Heart right ventricle (tissue), 16 donors: ENCODE measurements at regions of chr18 and their contacts with region 1.

Region 1: GRCh38 chr18:23619388-23619881 is 33.1 kb upstream of the NPC1 start:
- DNase-seq: peak in 1 of 2 donors; percentile 35
- ATAC-seq: peak; percentile 42 to 79 (median 72)
- H3K4me3 ChIP-seq: peak overlapping the region in 9 of 10 donors; percentile 23 to 69 (median 55)
- H3K27ac ChIP-seq: peak overlapping the region in 5 of 10 donors; percentile 20 to 44 (median 36)
- H3K4me1 ChIP-seq: peaks cover 0 to 15% (median 10%) of the 10 kb centered on the region in 9 donors
- H3K27me3 ChIP-seq: peaks cover 0 to 35% (median 0%) of the 10 kb centered on the region in 7 donors
- CTCF ChIP-seq: peak in 1 of 9 donors; percentile 7

Region 2: DNA sequence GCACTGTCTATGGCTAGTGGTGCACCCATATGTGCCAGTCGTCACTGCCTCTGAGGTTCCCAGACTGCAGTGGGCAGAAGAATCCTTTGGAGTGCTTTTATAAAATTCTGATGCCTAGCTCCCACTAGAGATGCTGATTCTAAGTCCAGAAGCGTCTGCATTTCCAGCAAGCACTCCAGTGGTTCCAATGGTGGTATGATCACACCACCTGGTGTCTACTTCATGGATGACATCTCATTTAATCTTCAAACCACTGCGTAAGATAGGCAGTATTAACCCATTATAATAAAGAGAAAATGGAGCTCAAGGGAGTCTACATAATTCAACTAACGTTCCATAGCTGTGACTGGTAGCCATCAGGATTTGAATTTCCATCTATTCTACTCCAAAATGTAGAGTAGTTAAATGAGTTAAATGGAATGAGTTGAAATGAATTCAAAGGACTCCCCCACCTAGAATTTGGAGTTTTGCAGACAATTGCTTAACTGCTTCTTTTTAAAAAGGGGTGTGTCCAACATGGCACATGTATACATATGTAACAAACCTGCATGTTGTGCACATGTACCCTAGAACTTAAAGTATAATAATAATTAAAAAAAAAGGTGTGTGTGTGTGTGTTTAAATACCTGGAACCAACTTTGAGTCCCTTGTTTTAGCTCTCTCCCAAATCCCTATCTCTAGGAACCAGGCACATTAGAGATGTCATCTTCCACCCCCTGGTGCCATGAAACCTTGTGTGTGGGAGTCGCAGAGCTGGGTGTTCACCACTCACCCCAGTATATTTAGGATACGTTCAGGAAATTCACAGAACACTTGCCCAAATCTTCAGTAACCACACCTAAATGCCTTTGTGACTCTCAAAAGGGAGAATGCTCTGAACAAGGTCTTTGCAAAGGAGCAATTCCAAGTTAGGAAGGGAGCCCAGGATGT is 83.9 kb after region 1 on chr18:
- intact Hi-C with region 1: loop called (anchors 1 to 5 kb)
- DNase-seq: peak in 1 of 2 donors; percentile 29
- ATAC-seq: peak in 7 of 8 donors; percentile 65 to 88 (median 80)
- H3K4me3 ChIP-seq: no peak overlapping the region
- H3K27ac ChIP-seq: peak overlapping the region in 2 of 10 donors; percentile 6 to 16
- H3K4me1 ChIP-seq: peaks cover 0 to 11% (median 0%) of the 10 kb centered on the region in 9 donors
- H3K27me3 ChIP-seq: peaks cover 0 to 7% (median 0%) of the 10 kb centered on the region in 7 donors
- CTCF ChIP-seq: peak; percentile 27 to 78 (median 61)

Region 3: GRCh38 chr18:23812546-23813440 is 193.4 kb after region 1 on chr18:
- intact Hi-C with region 1: loop called in 9 of 10 experiments (anchors 2 to 10 kb)
- DNase-seq: no peak
- ATAC-seq: no peak
- H3K4me3 ChIP-seq: no peak overlapping the region
- H3K27ac ChIP-seq: no peak overlapping the region
- H3K4me1 ChIP-seq: peaks cover 0 to 14% (median 0%) of the 10 kb centered on the region in 9 donors
- H3K27me3 ChIP-seq: no peaks in the 10 kb centered on the region
- CTCF ChIP-seq: peak; percentile 28 to 71 (median 62)